ENCODE measurements at regions of chr10 and their contacts with region 1.

Region 1: GRCh38 chr10:70221030-70221429 is 12.2 kb downstream of the PPA1 start:
- DNase-seq: no peak
- ATAC-seq: no peak
- H3K4me3 ChIP-seq: no peak overlapping the region
- H3K27ac ChIP-seq: no peak overlapping the region
- H3K4me1 ChIP-seq: peaks cover 29% of the 10 kb centered on the region
- H3K27me3 ChIP-seq: no peaks in the 10 kb centered on the region
- CTCF ChIP-seq: no peak

Region 2: GRCh38 chr10:70233109-70233938 is 12.3 kb after region 1 on chr10 and contains the start of gene PPA1:
- CTCF ChIA-PET with region 1: interaction called, 25 read pairs
- POLR2A ChIA-PET with region 1: interaction called, 12 read pairs
- intact Hi-C with region 1: loop called (anchors 1 kb)
- DNase-seq: peak; percentile 100
- ATAC-seq: peak; percentile 87
- H3K4me3 ChIP-seq: peak within 1 kb of the TSS; percentile 91
- H3K27ac ChIP-seq: peak within 1 kb of the TSS; percentile 75
- H3K4me1 ChIP-seq: peaks cover 29% of the 10 kb centered on the region
- H3K27me3 ChIP-seq: no peaks in the 10 kb centered on the region
- CTCF ChIP-seq: peak; percentile 71
- total RNA-seq, gene PPA1: 392 and 440 TPM in 2 replicates

Region 3: DNA sequence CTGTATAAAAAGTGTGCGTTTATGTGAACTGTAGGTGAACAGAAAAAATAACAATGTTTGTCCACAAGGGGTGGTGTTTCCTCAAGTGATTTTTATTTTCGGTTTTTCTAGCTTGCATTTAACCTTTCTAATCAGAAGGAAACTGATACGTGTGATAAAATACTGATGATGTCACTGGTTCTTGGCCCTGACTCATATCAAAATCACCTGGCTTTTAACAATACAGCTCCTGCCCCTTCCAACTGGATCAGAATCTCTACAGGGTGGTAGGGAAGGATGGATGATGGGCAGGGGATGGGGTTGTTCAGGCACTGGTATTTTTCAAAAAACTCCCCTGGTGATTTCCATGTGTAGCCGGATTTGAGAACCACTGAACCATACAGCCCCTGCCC is 51.9 kb after region 1 on chr10:
- CTCF ChIA-PET with region 1: interaction called, 13 read pairs
- POLR2A ChIA-PET with region 1: interaction called, 3 read pairs
- intact Hi-C with region 1: loop called (anchors 2 kb)
- DNase-seq: peak; percentile 69
- ATAC-seq: peak; percentile 78
- H3K4me3 ChIP-seq: peak overlapping the region; percentile 32; the same call in 1 of the 2 replicates
- H3K27ac ChIP-seq: no peak overlapping the region
- H3K4me1 ChIP-seq: peaks cover 2% of the 10 kb centered on the region; the same call in 1 of the 2 replicates
- H3K27me3 ChIP-seq: no peaks in the 10 kb centered on the region
- CTCF ChIP-seq: peak; percentile 90

Region 4: GRCh38 chr10:70363971-70364771 is 143.1 kb after region 1 on chr10:
- CTCF ChIA-PET with region 1: interaction called, 131 read pairs
- POLR2A ChIA-PET with region 1: interaction called, 35 read pairs
- intact Hi-C with region 1: loop called (anchors 1 kb)
- DNase-seq: peak; percentile 98
- ATAC-seq: peak; percentile 97
- H3K4me3 ChIP-seq: peak overlapping the region; percentile 36; the same call in 1 of the 2 replicates
- H3K27ac ChIP-seq: peak overlapping the region; percentile 14
- H3K4me1 ChIP-seq: peaks cover 14% of the 10 kb centered on the region
- H3K27me3 ChIP-seq: no peaks in the 10 kb centered on the region
- CTCF ChIP-seq: peak; percentile 100

Region 5: DNA sequence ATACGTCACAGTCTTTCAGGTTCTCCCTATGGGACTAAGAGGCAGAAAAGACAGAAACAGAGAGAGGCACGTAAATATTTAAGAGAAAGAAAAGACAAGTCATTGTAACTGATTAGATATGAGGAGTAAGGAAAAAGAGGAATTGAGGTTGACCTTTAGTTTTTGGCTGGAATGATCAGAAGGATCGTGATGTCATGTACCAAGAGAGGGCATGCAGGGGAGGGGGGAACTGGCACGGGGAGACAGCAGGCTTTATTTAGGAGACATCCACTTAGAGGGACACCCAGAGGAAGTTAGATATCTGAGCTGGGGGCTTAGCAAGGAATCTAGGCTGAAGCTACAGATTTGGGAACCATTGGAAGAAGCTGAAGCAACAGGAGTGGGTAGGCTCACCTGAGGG is 170.6 kb after region 1 on chr10:
- CTCF ChIA-PET with region 1: interaction called, 75 read pairs
- POLR2A ChIA-PET with region 1: interaction called, 4 read pairs
- intact Hi-C with region 1: loop called (anchors 1 kb)
- DNase-seq: no peak
- ATAC-seq: no peak
- H3K4me3 ChIP-seq: no peak overlapping the region
- H3K27ac ChIP-seq: no peak overlapping the region
- H3K4me1 ChIP-seq: peaks cover 8% of the 10 kb centered on the region; the same call in 1 of the 2 replicates
- H3K27me3 ChIP-seq: no peaks in the 10 kb centered on the region
- CTCF ChIP-seq: no peak

Region 6: DNA sequence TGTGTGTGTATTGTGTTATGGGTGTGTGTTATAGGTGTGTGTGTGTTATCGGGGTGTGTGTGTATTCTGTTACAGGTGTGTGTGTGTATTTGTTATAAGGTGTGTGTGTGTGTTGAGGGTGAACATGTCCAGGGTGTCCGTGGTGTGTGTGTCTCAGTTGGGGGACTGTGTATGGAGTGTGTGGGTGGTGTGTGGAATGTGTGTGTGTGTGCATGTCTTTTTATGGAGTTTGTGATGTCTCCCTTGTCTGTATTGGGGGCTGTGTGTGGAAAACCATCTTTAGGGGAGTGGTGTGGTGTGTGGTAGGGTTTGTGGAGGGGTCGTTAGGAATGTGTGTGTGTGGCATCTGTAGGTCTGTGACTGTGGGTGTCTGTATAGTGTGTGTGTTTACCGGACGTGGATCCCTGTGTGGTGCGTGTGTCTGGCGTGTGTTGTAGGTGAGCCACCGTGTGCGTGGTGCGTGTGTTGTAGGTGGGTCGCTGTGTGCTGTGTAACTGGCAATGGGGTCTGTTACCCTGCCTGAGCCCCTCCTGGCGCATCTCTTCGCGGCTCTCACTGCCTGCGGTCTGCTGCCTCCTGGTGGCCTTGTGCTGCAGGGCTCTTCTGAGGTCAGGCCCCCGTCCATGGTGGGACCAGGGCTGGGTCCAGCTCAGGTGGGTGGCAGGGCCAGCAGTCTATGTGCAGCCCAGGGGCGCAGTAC is 319.2 kb after region 1 on chr10:
- CTCF ChIA-PET with region 1: interaction called, 3 read pairs
- POLR2A ChIA-PET with region 1: no interaction called
- intact Hi-C with region 1: loop called (anchors 5 kb)
- DNase-seq: peak; percentile 69
- ATAC-seq: peak; percentile 66
- H3K4me3 ChIP-seq: no peak overlapping the region
- H3K27ac ChIP-seq: no peak overlapping the region
- H3K4me1 ChIP-seq: peaks cover 7% of the 10 kb centered on the region; the same call in 1 of the 2 replicates
- H3K27me3 ChIP-seq: no peaks in the 10 kb centered on the region
- CTCF ChIP-seq: peak; percentile 100